Right ventricle myocardium inferior (tissue), 1 donor: ENCODE measurements at regions of chr4 and their contacts with region 1.

Region 1: GRCh38 chr4:39458505-39459300 is at the starts of genes LIAS and RPL9:
- DNase-seq: peak; percentile 97
- ATAC-seq: peak; percentile 97
- total RNA-seq, gene LIAS: 29.5 TPM
- total RNA-seq, gene RPL9: 828 TPM

Region 2: DNA sequence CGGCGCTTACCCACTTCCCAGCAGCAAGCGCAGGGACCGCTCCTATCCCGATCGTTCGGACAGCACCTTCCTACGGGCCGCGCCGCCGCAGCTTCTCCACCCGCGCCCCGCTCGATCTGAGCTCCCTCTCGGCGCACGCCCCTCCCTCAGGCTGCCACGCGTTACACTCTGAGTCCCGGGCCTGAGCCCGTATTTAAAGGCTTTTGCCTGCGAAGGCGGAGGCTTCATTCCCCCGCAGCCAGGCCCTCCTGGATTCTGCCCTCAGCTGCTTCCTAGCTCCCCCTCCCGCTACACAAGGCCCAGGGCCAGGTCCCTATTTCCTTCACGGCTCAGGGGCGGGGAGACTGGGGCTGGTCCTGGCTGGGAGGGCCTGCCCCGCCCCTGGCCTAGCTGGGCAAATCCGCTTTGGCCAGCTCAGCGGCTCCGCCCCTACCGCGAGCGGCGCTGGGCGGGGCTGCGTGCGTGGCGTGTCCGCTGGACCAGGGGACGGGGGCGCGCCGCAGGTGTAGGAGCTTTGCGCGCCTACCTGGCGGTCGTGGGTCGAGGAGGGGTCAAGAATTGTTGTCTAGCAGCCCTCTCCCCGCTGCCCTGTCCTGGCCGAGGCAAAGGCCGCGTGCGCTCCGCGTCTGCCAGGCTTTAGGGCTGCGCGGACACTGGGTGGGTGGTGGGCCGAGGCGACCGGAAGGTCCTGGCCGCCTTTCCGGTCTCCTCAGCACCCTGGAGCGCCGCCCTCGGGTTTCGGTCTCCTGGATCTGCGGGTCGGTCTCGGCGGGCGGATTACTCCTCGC is 68.8 kb after region 1 on chr4 and contains the start of gene UGDH:
- intact Hi-C with region 1: loop called (anchors 5 kb)
- DNase-seq: peak; percentile 98
- ATAC-seq: peak; percentile 99
- total RNA-seq, gene UGDH: 16.6 TPM

Region 3: GRCh38 chr4:39638354-39639240 is 179.9 kb after region 1 on chr4 and contains the start of gene SMIM14:
- intact Hi-C with region 1: loop called (anchors 2 kb)
- DNase-seq: peak; percentile 99
- ATAC-seq: peak; percentile 99
- total RNA-seq, gene SMIM14: 11.0 TPM

Region 4: GRCh38 chr4:40056716-40057585 is 598.2 kb after region 1 on chr4 and contains the start of gene N4BP2:
- intact Hi-C with region 1: loop called (anchors 5 kb)
- DNase-seq: peak; percentile 94
- ATAC-seq: peak; percentile 86
- total RNA-seq, gene N4BP2: 4.1 TPM